CD4-positive, alpha-beta memory T cell (primary cell): ENCODE measurements at regions of chr9 and their contacts with region 1.

Region 1: GRCh38 chr9:131610231-131610761 is 65.0 kb downstream of the PRRT1B start:
- DNase-seq: no peak
- H3K4me3 ChIP-seq: no peak overlapping the region
- H3K4me3 Mint-ChIP-seq: peak overlapping the region in 1 of 8 donors; percentile 31
- H3K27ac ChIP-seq: no peak overlapping the region
- H3K27ac Mint-ChIP-seq: peak overlapping the region in 5 of 7 donors; percentile 68 to 92 (median 84)
- H3K4me1 ChIP-seq: no peaks in the 10 kb centered on the region
- H3K4me1 Mint-ChIP-seq: peaks cover 0 to 18% (median 12%) of the 10 kb centered on the region in 4 donors
- H3K27me3 ChIP-seq: no peaks in the 10 kb centered on the region
- H3K27me3 Mint-ChIP-seq: no peaks in the 10 kb centered on the region

Region 2: GRCh38 chr9:131253891-131254491 is 356.3 kb before region 1 on chr9:
- CTCF ChIA-PET with region 1: no interaction called
- POLR2A ChIA-PET with region 1: no interaction called
- intact Hi-C with region 1: no loop called
- DNase-seq: no peak
- H3K4me3 ChIP-seq: no peak overlapping the region
- H3K4me3 Mint-ChIP-seq: peak overlapping the region in 7 of 8 donors; percentile 27 to 91 (median 46)
- H3K27ac ChIP-seq: peak overlapping the region; percentile 77
- H3K27ac Mint-ChIP-seq: peak overlapping the region; percentile 57 to 100 (median 72)
- H3K4me1 ChIP-seq: peaks cover 72% of the 10 kb centered on the region
- H3K4me1 Mint-ChIP-seq: peaks cover 27 to 73% (median 50%) of the 10 kb centered on the region in 4 donors
- H3K27me3 ChIP-seq: no peaks in the 10 kb centered on the region
- H3K27me3 Mint-ChIP-seq: no peaks in the 10 kb centered on the region

Region 3: GRCh38 chr9:131554088-131554864 is 56.0 kb before region 1 on chr9:
- CTCF ChIA-PET with region 1: no interaction called
- POLR2A ChIA-PET with region 1: no interaction called
- intact Hi-C with region 1: no loop called
- DNase-seq: no peak
- H3K4me3 ChIP-seq: no peak overlapping the region
- H3K4me3 Mint-ChIP-seq: no peak overlapping the region
- H3K27ac ChIP-seq: no peak overlapping the region
- H3K27ac Mint-ChIP-seq: no peak overlapping the region
- H3K4me1 ChIP-seq: no peaks in the 10 kb centered on the region
- H3K4me1 Mint-ChIP-seq: peaks cover 3 to 14% (median 5%) of the 10 kb centered on the region in 4 donors
- H3K27me3 ChIP-seq: peaks cover 4% of the 10 kb centered on the region
- H3K27me3 Mint-ChIP-seq: peaks cover 22 to 28% of the 10 kb centered on the region in 2 donors

Region 4: DNA sequence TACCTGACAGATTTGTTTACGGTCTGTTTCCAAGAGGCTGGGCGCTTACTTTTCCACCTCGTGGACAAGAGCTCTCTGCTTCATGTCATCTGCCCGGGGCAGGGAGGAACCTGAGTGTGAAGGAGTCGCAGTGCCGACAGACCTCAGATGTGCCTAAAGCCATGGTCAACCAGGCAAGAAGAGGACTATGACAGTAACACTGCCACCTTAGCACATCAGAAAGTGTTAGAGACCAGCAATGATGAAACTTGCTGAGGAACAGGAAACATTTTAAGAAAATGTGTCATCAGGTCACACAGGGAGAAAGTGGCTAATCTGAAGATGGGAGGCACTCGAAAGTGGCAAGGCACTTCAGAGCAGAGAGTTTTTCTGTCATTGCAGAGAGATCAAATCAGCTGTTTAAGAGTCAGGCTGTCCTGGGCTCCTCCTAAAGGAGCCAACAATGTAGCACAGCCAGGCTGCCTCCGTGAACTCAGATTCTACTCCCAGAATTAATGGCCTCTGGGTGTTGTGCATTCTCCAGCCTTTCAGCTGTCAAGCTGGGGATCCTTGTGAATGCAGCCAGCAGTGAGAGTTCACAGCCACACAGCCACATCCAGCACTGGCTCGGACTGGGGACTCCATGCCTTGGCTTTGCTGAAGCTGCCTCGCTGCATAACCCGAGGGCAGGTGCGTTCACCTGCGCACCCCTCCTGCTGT is 34.9 kb after region 1 on chr9:
- CTCF ChIA-PET with region 1: no interaction called
- POLR2A ChIA-PET with region 1: no interaction called
- intact Hi-C with region 1: loop called (anchors 5 kb)
- DNase-seq: no peak
- H3K4me3 ChIP-seq: no peak overlapping the region
- H3K4me3 Mint-ChIP-seq: peak overlapping the region in 5 of 8 donors; percentile 4 to 71 (median 45)
- H3K27ac ChIP-seq: peak overlapping the region; percentile 28
- H3K27ac Mint-ChIP-seq: peak overlapping the region; percentile 75 to 94 (median 86)
- H3K4me1 ChIP-seq: peaks cover 38% of the 10 kb centered on the region
- H3K4me1 Mint-ChIP-seq: peaks cover 26 to 73% (median 44%) of the 10 kb centered on the region in 4 donors
- H3K27me3 ChIP-seq: no peaks in the 10 kb centered on the region
- H3K27me3 Mint-ChIP-seq: no peaks in the 10 kb centered on the region